GM13977 (cell line): ENCODE measurements at regions of chr9 and their contacts with region 1.

Region 1: DNA sequence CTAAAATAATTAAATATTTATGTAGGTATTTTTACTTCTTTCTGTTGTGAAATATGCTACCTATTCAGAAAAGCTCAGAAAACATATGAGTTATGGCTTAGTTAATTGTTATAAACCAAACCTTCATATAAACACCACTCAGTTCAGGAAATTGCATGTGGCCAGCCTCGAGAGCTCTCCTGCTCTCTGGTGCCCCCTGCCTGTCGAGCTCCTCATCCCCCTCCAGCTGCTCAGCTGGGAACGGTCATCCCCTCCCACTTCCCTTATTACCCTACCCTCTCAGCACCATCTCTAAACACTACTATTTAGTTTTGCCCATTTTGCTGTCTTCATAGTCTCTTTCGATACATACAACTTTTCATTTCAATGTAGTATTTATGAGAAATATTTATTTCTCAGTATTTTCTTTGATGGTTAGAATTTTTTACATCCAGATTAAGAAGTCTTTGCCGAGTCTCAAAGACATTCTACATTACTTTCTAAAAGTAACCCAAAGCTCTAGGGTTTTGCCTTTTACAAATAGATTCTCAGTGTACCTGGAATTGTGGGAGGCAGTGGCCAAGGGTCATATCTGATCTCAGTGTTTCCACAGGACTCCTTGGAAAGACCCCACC is 51.2 kb upstream of the SEMA4D start:
- DNase-seq: peak; percentile 87
- CTCF ChIP-seq: peak; percentile 94

Region 2: GRCh38 chr9:89442981-89443814 is 105.9 kb before region 1 on chr9:
- in situ Hi-C with region 1: loop called (anchors 10 kb)
- DNase-seq: peak; percentile 64
- CTCF ChIP-seq: no peak